CD4-positive, alpha-beta memory T cell (primary cell): ENCODE measurements at regions of chr5 and their contacts with region 1.

Region 1: GRCh38 chr5:142012792-142013388 is at the start of gene GNPDA1:
- DNase-seq: peak; percentile 56 to 72 (median 62)
- H3K4me3 ChIP-seq: peak within 1 kb of the TSS; percentile 79 to 84
- H3K4me3 Mint-ChIP-seq: peak within 1 kb of the TSS; percentile 86 to 94 (median 88)
- H3K27ac ChIP-seq: peak within 1 kb of the TSS; percentile 70
- H3K27ac Mint-ChIP-seq: peak within 1 kb of the TSS; percentile 91 to 96 (median 95)
- H3K4me1 ChIP-seq: peaks cover 64% of the 10 kb centered on the region
- H3K4me1 Mint-ChIP-seq: peaks cover 44 to 71% (median 56%) of the 10 kb centered on the region in 4 donors
- H3K27me3 ChIP-seq: no peaks in the 10 kb centered on the region
- H3K27me3 Mint-ChIP-seq: no peaks in the 10 kb centered on the region
- total RNA-seq, gene GNPDA1: 23.0 to 24.1 TPM

Region 2: DNA sequence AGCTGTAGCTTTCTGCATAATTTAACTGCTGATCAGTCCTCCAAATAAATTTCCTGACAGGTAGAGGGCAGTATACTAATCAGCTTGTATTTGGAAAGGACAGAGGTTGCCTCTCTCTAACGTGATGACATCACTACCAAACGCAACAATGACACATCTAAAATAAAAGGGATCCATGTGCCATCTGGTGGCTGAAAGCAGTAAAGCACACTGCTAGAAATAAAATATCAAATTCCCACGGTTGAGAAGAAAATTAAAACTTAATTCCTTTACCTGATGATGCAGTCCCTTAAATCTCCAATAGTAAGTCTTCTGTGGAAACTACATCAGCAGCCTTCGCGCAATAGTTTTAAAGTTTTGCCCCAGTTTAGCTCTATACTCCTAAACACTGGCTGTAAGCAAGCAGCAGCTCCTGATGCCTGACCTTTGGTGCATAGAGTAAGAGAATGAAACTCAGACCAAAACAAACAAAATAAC is 448.6 kb before region 1 on chr5:
- CTCF ChIA-PET with region 1: no interaction called
- POLR2A ChIA-PET with region 1: no interaction called
- intact Hi-C with region 1: no loop called
- DNase-seq: peak; percentile 85 to 89 (median 88)
- H3K4me3 ChIP-seq: no peak overlapping the region
- H3K4me3 Mint-ChIP-seq: peak overlapping the region in 1 of 8 donors; percentile 26
- H3K27ac ChIP-seq: peak overlapping the region; percentile 59
- H3K27ac Mint-ChIP-seq: peak overlapping the region; percentile 74 to 93 (median 85)
- H3K4me1 ChIP-seq: peaks cover 17% of the 10 kb centered on the region
- H3K4me1 Mint-ChIP-seq: peaks cover 22 to 48% (median 28%) of the 10 kb centered on the region in 4 donors
- H3K27me3 ChIP-seq: no peaks in the 10 kb centered on the region
- H3K27me3 Mint-ChIP-seq: no peaks in the 10 kb centered on the region

Region 3: DNA sequence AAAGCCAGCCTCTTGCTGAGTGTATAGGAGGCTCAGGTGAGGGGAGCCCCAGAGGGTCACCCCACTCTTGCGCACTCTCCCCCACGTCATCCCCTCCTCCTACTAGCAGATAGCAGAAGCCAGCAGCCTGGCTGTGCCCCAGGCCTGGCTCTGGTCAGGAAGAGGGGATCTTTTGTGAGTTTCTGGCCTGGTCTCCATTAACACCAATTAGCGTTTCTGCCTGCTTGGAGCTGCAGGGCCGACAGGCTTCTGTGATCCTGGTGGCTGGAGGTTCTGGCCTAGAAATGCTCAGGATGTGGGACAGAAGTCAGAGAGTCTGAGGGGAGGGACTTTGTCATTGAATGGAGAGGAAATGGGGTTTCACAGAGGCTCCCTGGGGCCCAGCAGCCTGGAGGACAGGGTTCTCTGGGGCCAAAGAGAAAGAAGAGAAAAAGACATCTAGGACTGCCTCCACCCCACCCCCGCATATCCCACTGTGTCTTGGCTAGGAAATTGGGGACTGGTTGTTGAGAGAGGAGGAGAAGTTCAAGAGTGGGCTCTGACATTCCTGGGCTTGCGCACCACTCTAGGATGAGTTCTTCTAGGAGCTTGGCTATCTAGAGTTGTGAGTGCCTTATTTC is 283.4 kb before region 1 on chr5:
- CTCF ChIA-PET with region 1: no interaction called
- POLR2A ChIA-PET with region 1: no interaction called
- intact Hi-C with region 1: no loop called
- DNase-seq: no peak
- H3K4me3 ChIP-seq: no peak overlapping the region
- H3K4me3 Mint-ChIP-seq: no peak overlapping the region
- H3K27ac ChIP-seq: no peak overlapping the region
- H3K27ac Mint-ChIP-seq: no peak overlapping the region
- H3K4me1 ChIP-seq: no peaks in the 10 kb centered on the region
- H3K4me1 Mint-ChIP-seq: no peaks in the 10 kb centered on the region
- H3K27me3 ChIP-seq: no peaks in the 10 kb centered on the region
- H3K27me3 Mint-ChIP-seq: peaks cover 10 to 18% of the 10 kb centered on the region in 2 donors

Region 4: DNA sequence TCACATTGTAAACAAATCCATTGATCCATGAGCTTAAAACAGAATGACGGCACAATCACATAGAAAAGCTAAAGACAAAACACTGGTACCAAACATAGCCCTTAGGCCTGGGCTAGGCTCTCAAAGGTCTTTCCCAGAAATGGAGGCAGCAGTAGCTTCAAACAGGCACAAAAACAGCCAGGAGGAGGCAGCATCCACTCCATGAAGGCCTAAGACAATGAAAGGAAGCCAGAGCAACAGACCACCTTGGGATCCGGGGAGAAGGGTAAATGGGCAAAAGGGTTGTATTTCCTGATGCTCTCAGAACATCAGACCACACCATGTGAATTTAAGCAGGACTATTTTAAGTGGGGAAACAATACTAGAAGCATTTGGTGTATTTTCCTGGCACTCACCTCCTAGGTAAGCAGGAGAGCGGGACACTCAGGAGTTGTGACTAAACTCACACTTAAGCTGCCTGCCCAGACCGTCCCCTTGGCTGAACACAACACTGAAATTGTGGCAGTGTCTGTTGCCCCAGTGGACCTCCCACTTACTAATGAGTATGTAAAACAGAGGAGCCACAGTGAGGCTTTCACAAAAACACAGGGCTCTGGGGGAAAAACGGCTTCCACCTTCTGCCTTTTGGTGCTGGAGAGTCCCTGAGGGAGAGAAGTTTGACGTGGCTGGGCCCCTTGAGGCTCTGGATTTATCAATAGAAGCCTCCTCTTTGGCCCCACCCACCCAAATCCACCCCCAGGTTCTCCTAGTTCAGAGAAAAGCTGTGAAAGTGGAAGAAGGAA is 12.0 kb before region 1 on chr5:
- CTCF ChIA-PET with region 1: interaction called, 177 read pairs
- POLR2A ChIA-PET with region 1: interaction called, 10 read pairs
- intact Hi-C with region 1: no loop called
- DNase-seq: no peak
- H3K4me3 ChIP-seq: no peak overlapping the region
- H3K4me3 Mint-ChIP-seq: no peak overlapping the region
- H3K27ac ChIP-seq: no peak overlapping the region
- H3K27ac Mint-ChIP-seq: peak overlapping the region in 5 of 7 donors; percentile 48 to 82 (median 76)
- H3K4me1 ChIP-seq: no peaks in the 10 kb centered on the region
- H3K4me1 Mint-ChIP-seq: peaks cover 3 to 9% (median 5%) of the 10 kb centered on the region in 4 donors
- H3K27me3 ChIP-seq: no peaks in the 10 kb centered on the region
- H3K27me3 Mint-ChIP-seq: no peaks in the 10 kb centered on the region

Region 5: DNA sequence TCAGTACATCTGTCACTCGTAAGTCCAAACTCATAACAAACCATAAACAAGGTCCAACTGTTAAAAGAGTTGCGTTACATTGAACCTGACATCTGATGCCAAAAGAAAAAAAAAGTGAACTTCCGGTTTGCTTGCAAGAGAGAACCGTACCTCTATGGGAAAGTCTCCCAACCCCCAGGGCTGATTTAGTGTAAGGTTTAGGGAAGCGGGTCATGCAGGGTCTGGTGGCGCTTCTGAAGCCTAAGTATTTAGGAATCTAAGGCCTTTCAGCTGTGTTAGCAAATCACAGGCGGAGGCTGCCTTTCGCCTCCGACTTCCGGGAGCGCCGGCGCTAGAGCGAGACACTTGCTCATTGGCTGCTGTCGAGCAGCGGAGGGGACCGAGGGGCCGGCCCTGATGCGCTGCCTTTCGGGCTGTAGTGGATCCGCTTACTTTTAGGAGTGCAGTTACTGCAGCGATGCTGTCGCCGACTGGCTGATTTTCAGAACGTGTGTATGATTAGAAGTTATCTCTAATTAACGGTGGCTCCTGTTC is 11.9 kb after region 1 on chr5:
- CTCF ChIA-PET with region 1: interaction called, 67 read pairs
- POLR2A ChIA-PET with region 1: interaction called, 90 read pairs
- intact Hi-C with region 1: loop called (anchors 1 kb)
- DNase-seq: peak; percentile 78 to 86 (median 81)
- H3K4me3 ChIP-seq: peak overlapping the region; percentile 37 to 52
- H3K4me3 Mint-ChIP-seq: peak overlapping the region; percentile 84 to 94 (median 88)
- H3K27ac ChIP-seq: peak overlapping the region; percentile 57
- H3K27ac Mint-ChIP-seq: peak overlapping the region; percentile 93 to 99 (median 98)
- H3K4me1 ChIP-seq: peaks cover 13% of the 10 kb centered on the region
- H3K4me1 Mint-ChIP-seq: peaks cover 16 to 23% (median 19%) of the 10 kb centered on the region in 4 donors
- H3K27me3 ChIP-seq: no peaks in the 10 kb centered on the region
- H3K27me3 Mint-ChIP-seq: no peaks in the 10 kb centered on the region

Region 6: DNA sequence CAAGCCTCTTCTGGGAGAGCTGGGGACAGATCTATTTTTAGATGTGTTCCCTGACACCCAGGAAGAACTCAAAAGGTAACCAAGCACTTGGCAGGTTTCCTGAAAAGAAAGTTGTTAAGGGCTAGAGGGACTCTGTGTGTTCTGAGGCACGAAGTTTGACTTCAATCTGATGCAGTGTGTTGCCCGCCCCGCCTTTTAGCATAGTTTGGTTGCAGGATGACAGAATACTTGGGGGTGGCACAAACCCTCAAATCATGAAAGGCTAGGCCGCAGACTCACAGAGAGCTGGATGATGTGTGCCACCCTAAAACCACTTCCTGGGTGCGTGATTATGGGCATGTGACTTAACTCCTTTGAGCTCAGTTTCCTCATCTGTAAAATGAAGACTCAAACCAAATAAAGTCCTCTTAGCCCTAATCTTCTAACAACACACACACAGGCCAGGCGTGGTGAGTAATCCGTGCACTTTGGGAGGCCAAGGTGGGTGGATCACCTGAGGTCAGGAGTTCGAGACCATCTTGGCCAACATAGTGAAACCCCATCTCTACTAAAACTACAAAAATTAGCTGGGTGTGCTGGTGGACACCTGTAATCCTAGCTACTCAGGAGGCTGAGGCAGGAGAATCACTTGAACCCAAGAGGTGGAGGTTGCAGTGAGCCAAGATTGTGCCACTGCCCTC is 82.9 kb after region 1 on chr5:
- CTCF ChIA-PET with region 1: interaction called, 8 read pairs
- POLR2A ChIA-PET with region 1: interaction called, 39 read pairs
- intact Hi-C with region 1: no loop called
- DNase-seq: peak; percentile 85 to 93 (median 91)
- H3K4me3 ChIP-seq: peak overlapping the region in 1 of 2 donors; percentile 27
- H3K4me3 Mint-ChIP-seq: peak overlapping the region; percentile 37 to 73 (median 57)
- H3K27ac ChIP-seq: peak overlapping the region; percentile 84
- H3K27ac Mint-ChIP-seq: peak overlapping the region; percentile 92 to 98 (median 96)
- H3K4me1 ChIP-seq: peaks cover 48% of the 10 kb centered on the region
- H3K4me1 Mint-ChIP-seq: peaks cover 31 to 51% (median 36%) of the 10 kb centered on the region in 4 donors
- H3K27me3 ChIP-seq: no peaks in the 10 kb centered on the region
- H3K27me3 Mint-ChIP-seq: no peaks in the 10 kb centered on the region

Region 7: GRCh38 chr5:142145106-142145900 is 132.4 kb after region 1 on chr5:
- CTCF ChIA-PET with region 1: interaction called, 203 read pairs
- POLR2A ChIA-PET with region 1: interaction called, 7 read pairs
- intact Hi-C with region 1: loop called (anchors 1 kb)
- DNase-seq: peak; percentile 54 to 66 (median 57)
- H3K4me3 ChIP-seq: no peak overlapping the region
- H3K4me3 Mint-ChIP-seq: no peak overlapping the region
- H3K27ac ChIP-seq: no peak overlapping the region
- H3K27ac Mint-ChIP-seq: no peak overlapping the region
- H3K4me1 ChIP-seq: no peaks in the 10 kb centered on the region
- H3K4me1 Mint-ChIP-seq: no peaks in the 10 kb centered on the region
- H3K27me3 ChIP-seq: no peaks in the 10 kb centered on the region
- H3K27me3 Mint-ChIP-seq: no peaks in the 10 kb centered on the region

Region 8: DNA sequence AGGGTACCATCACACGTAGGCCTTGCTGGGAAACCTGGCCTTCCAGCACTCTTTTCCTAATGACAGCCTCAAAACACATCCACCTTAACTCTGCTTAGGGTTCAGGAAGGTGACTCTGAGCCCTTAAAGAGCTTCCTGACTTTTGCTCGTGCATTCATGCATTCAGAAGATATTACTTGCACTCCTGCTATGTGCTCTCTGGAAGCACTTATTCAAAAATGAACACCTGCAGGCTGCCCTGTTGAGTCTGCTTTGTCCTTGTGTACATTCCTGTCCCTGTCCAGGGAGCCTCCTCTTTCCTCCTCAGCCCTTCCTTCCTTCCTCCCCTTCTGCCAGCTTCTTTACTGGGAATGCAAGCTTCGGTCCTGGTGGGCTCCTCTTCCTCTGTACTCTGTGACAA is 250.5 kb after region 1 on chr5:
- CTCF ChIA-PET with region 1: no interaction called
- POLR2A ChIA-PET with region 1: no interaction called
- intact Hi-C with region 1: no loop called
- DNase-seq: no peak
- H3K4me3 ChIP-seq: no peak overlapping the region
- H3K4me3 Mint-ChIP-seq: no peak overlapping the region
- H3K27ac ChIP-seq: no peak overlapping the region
- H3K27ac Mint-ChIP-seq: peak overlapping the region in 1 of 7 donors; percentile 68
- H3K4me1 ChIP-seq: no peaks in the 10 kb centered on the region
- H3K4me1 Mint-ChIP-seq: peaks cover 0 to 6% (median 0%) of the 10 kb centered on the region in 4 donors
- H3K27me3 ChIP-seq: no peaks in the 10 kb centered on the region
- H3K27me3 Mint-ChIP-seq: peaks cover 0 to 3% of the 10 kb centered on the region in 2 donors

Region 9: GRCh38 chr5:142699184-142699720 is 686.4 kb after region 1 on chr5:
- CTCF ChIA-PET with region 1: no interaction called
- POLR2A ChIA-PET with region 1: no interaction called
- intact Hi-C with region 1: loop called (anchors 5 kb)
- DNase-seq: peak; percentile 68 to 73 (median 72)
- H3K4me3 ChIP-seq: no peak overlapping the region
- H3K4me3 Mint-ChIP-seq: no peak overlapping the region
- H3K27ac ChIP-seq: no peak overlapping the region
- H3K27ac Mint-ChIP-seq: no peak overlapping the region
- H3K4me1 ChIP-seq: no peaks in the 10 kb centered on the region
- H3K4me1 Mint-ChIP-seq: peaks cover 0 to 2% (median under 1%) of the 10 kb centered on the region in 4 donors
- H3K27me3 ChIP-seq: no peaks in the 10 kb centered on the region
- H3K27me3 Mint-ChIP-seq: peaks cover 2% of the 10 kb centered on the region in 2 donors